ENCODE measurements at regions of chr11 and their contacts with region 1.

Region 1: GRCh38 chr11:64688534-64688982 is 34.4 kb downstream of the NRXN2 start:
- H3K4me3 ChIP-seq: peak overlapping the region; percentile 52
- H3K27ac ChIP-seq: no peak overlapping the region
- H3K4me1 ChIP-seq: no peaks in the 10 kb centered on the region
- CTCF ChIP-seq: peak; percentile 92

Region 2: GRCh38 chr11:63938479-63939396 is 749.8 kb before region 1 on chr11 and contains the start of gene NAA40:
- CTCF ChIA-PET with region 1: no interaction called
- POLR2A ChIA-PET with region 1: no interaction called
- H3K4me3 ChIP-seq: peak within 1 kb of the TSS; percentile 90
- H3K27ac ChIP-seq: peak within 1 kb of the TSS; percentile 57; the same call in 1 of the 2 replicates
- H3K4me1 ChIP-seq: no peaks in the 10 kb centered on the region
- CTCF ChIP-seq: peak; percentile 25; the same call in 1 of the 2 replicates

Region 3: DNA sequence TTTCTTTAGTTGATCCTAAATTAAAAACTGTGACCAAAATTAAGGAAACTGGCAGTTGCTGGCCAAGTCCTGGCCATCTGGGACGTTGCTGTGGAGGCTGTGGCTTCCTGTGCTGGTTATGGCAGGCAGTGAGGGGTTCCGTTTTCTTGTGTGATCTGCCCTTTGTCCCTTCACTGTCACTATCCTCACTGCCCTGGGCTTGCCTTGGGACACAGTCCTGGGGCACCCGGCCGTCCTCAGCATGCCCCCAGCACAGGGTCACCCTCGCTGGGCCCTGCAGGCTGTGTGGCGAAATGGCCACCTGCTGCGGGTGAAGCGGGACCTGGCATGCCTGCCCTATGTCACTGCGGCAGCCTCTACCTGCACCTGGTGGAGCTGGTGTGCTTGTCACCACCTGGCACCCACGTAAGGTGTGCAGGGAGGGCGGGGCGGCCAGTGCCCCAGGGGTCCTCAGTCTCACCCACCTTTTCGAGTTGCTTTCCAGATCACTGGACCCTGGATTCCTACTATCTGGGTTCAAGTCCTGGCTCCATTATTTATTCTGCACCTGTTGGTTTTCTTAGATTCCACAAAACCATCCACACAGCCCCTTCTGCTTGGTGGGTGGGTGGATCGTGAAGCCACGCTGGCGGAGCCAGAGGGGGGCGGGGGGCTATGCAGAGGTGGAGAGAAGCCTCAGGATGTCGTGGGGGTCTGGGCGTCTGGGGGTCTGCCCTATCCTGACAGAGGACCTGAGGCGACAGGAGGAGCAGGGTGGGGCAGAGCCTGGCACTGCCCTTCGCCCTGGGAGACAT is 149.9 kb before region 1 on chr11:
- CTCF ChIA-PET with region 1: no interaction called
- POLR2A ChIA-PET with region 1: no interaction called
- H3K4me3 ChIP-seq: no peak overlapping the region
- H3K27ac ChIP-seq: no peak overlapping the region
- H3K4me1 ChIP-seq: no peaks in the 10 kb centered on the region
- CTCF ChIP-seq: no peak

Region 4: DNA sequence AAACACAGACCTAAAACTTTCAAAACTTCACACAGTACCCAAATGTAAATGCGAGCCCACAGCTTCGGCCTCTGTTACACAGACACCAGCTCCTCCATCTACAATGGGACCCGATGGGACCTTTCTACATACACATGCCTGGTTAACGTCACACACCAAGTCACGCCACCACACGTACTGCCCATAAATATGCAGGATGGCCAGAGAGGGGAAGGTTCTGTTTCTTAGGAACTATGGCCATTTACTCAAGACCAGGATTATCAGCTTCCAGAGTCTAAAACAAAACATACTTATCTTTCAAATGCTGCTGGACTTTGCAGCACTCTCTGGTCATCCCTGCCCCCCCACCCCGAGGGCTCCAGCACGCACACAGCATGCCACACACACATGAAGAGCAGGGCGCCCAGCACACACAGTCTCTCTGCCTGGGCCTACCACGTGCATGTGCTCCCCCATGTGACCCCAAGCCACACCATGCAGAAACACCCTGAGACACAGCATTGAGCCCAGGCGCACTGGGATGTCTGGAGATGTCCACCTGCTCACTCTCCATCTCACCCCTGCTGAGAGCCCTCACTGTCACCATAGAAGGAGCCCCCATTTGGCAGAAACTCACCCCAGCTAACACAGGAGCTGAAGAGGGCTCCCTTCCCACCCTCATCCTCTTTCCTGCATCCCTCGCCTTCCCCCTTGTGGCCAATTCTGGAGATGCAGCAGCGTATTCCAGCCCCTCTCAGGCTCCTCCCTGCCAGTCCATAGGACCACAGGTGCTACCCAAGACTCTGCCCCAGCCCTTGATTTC is 35.8 kb before region 1 on chr11:
- CTCF ChIA-PET with region 1: interaction called, 33 read pairs
- POLR2A ChIA-PET with region 1: no interaction called
- H3K4me3 ChIP-seq: no peak overlapping the region
- H3K27ac ChIP-seq: no peak overlapping the region
- H3K4me1 ChIP-seq: no peaks in the 10 kb centered on the region
- CTCF ChIP-seq: peak; percentile 81

Region 5: GRCh38 chr11:64675450-64676260 is 12.9 kb before region 1 on chr11:
- CTCF ChIA-PET with region 1: interaction called, 34 read pairs
- POLR2A ChIA-PET with region 1: interaction called, 3 read pairs
- H3K4me3 ChIP-seq: no peak overlapping the region
- H3K27ac ChIP-seq: no peak overlapping the region
- H3K4me1 ChIP-seq: no peaks in the 10 kb centered on the region; the same call in 1 of the 2 replicates
- CTCF ChIP-seq: no peak

Region 6: GRCh38 chr11:64710418-64711137 is 22.0 kb after region 1 on chr11:
- CTCF ChIA-PET with region 1: interaction called, 53 read pairs
- POLR2A ChIA-PET with region 1: no interaction called
- H3K4me3 ChIP-seq: no peak overlapping the region
- H3K27ac ChIP-seq: no peak overlapping the region
- H3K4me1 ChIP-seq: no peaks in the 10 kb centered on the region
- CTCF ChIP-seq: no peak

Region 7: GRCh38 chr11:64723117-64723906 is 34.8 kb after region 1 on chr11 and contains the start of gene NRXN2:
- CTCF ChIA-PET with region 1: interaction called, 16 read pairs
- POLR2A ChIA-PET with region 1: interaction called, 3 read pairs
- H3K4me3 ChIP-seq: peak within 1 kb of the TSS; percentile 54
- H3K27ac ChIP-seq: no peak within 1 kb of the TSS; the same call in 1 of the 2 replicates
- H3K4me1 ChIP-seq: no peaks in the 10 kb centered on the region
- CTCF ChIP-seq: peak; percentile 91

Region 8: DNA sequence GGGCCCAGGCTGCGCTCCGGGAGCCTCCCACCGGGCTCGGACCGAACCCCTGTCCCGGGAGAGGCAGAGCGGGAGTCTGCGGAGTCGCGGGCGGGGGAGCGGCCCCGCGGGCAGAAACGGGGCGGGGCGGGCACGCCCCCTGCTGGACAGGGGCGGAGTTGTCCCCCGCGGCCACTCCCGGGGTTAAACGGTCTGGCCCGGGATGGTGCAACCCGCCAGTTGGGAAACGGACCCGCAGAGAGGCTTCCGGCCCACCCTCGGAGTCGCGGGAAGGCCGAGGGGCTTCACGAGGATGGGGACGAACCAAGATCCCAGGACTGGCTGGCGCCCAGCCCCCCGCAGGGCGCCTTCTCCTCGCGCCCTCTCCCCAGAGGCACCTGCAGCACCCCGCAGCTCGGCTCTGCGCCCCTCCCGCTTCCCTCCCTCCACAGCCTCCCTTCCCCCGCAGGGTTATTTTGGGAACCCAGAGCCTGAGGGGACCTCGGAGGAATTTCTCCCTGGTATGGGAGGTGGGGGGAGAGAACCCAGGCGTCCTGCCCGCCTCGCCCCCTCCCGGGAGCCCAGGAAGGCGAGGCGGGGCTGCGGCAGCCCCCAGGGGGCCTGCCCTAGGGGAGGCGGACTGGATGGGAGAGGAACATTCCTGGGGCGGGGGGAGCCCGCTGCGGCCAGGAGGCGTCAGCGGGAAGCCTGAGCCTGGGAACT is 54.5 kb after region 1 on chr11:
- CTCF ChIA-PET with region 1: interaction called, 31 read pairs
- POLR2A ChIA-PET with region 1: no interaction called
- H3K4me3 ChIP-seq: peak overlapping the region; percentile 30
- H3K27ac ChIP-seq: no peak overlapping the region
- H3K4me1 ChIP-seq: no peaks in the 10 kb centered on the region
- CTCF ChIP-seq: peak; percentile 84

Region 9: DNA sequence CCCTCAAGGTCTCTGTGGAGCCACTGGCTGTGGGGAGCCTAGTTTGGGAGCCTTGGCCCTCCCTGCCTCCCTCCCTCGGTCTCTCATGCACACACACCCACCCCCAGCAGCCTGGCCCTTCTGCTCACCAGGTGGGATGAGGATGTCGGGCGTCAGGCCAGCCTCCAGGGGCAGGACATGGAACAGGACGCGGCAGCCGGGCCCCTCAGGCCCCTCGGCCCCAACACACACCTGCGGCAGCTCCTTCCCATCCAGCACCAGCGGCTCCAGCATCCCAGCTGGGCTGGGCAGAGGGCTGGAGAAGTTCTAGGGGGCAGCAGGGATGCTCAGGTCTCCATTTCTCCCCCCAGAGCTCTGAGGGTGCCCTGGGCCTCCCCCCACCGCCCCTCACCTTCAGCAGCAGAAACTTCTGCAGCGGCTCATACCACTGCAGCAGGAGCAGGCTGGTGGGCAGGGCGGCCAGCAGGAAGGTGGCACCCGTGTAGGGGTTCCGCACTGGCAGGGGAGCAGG is 103.3 kb after region 1 on chr11:
- CTCF ChIA-PET with region 1: no interaction called
- POLR2A ChIA-PET with region 1: no interaction called
- H3K4me3 ChIP-seq: no peak overlapping the region
- H3K27ac ChIP-seq: no peak overlapping the region
- H3K4me1 ChIP-seq: no peaks in the 10 kb centered on the region
- CTCF ChIP-seq: no peak

Region 10: DNA sequence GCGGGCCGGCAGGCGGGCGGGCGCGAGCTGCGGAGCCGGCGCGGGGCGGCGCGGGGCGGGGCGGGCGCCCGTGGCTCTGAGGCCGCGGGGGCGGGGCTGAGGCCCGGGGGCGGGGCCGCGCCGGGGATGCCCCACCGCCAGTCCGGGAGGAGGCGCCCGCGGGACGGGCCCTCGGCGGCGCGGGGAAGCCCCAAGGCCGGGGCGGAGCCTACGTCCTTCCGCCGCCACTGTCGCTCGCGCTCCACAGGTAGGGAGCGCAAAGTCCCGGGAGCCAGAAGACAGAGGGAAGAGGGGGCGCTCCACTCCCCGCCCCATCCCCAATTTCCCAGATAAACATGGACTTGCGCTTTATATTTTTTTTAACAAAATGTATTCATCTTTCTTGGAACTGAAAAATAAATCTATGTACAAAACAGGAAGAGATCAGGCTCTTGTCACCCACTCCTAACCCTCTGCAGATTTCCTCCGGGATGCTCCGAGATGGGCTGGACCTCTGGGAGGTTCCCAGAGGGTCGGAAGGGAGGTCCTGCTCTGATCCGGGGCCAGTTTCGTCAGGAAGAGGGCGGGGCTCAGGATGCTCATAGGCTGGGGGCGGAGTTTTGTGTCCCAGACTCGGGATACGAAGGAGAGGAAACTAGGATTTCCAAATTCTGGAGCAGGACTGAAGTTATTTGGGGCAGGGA is 114.7 kb after region 1 on chr11 and contains the start of gene MAP4K2:
- CTCF ChIA-PET with region 1: no interaction called
- POLR2A ChIA-PET with region 1: no interaction called
- H3K4me3 ChIP-seq: peak within 1 kb of the TSS; percentile 47
- H3K27ac ChIP-seq: no peak within 1 kb of the TSS; the same call in 1 of the 2 replicates
- H3K4me1 ChIP-seq: peaks cover 4% of the 10 kb centered on the region
- CTCF ChIP-seq: peak; percentile 44

Measured in HEK293 (cell line).